Common myeloid progenitor, CD34-positive (primary cell): ENCODE measurements at regions of chr2 and their contacts with region 1.

Region 1: DNA sequence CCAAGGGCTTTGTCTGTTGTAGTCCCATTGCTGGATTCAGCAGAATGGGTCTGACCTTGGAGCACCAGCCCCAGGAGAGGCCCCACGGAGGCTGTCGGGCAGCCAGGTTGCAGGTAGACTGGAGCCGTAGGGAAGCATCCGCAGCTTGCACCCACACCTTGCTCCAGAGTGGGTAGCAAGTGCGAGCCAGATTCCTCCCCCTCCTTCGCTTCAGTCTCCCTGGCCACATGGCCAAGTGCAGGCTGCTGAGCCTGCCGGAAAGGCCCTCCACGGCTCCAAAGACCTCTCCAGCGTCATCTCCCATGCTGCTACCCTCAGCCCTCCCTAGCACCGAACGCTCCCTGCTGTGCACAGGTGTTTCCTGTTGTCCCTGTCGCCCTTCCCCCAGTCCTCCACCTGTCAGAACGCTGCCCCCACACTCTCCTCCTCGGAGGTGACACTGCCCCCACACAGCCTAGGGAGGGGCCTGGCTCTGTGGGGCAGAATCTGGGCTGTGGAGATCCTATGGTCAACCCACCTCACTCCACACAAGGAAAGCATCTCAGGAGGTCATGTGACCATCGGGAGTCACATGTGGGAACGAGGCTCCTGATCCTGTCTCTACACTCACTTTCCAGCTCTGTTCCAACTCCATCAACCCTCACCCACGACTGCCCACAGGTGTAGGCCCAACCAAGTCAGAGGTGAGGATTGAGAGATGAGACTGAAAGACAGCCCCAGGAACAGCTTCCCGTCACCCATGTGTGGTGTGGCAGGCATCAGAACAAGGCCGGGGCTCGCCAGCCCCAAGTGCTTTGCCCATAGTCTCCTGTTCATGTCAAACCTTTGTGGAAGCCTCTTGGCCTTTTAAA is 8.3 kb downstream of the KCNF1 start:
- DNase-seq: no peak
- H3K4me3 ChIP-seq: no peak overlapping the region
- H3K27ac ChIP-seq: no peak overlapping the region
- H3K4me1 ChIP-seq: peaks cover 0 to 2% (median 0%) of the 10 kb centered on the region in 4 experiments
- H3K27me3 ChIP-seq: peaks cover 0 to 28% (median 9%) of the 10 kb centered on the region in 5 experiments

Region 2: GRCh38 chr2:10909050-10909995 is 10.7 kb before region 1 on chr2:
- CTCF ChIA-PET with region 1: interaction called, 11 read pairs
- POLR2A ChIA-PET with region 1: no interaction called
- DNase-seq: peak; percentile 32 to 62 (median 61)
- H3K4me3 ChIP-seq: no peak overlapping the region
- H3K27ac ChIP-seq: no peak overlapping the region
- H3K4me1 ChIP-seq: peaks cover 0 to 17% (median 10%) of the 10 kb centered on the region in 4 experiments
- H3K27me3 ChIP-seq: peaks cover 0 to 48% (median 22%) of the 10 kb centered on the region in 5 experiments

Region 3: GRCh38 chr2:10935953-10936942 is 16.3 kb after region 1 on chr2:
- CTCF ChIA-PET with region 1: no interaction called
- POLR2A ChIA-PET with region 1: no interaction called
- DNase-seq: no peak
- H3K4me3 ChIP-seq: no peak overlapping the region
- H3K27ac ChIP-seq: no peak overlapping the region
- H3K4me1 ChIP-seq: no peaks in the 10 kb centered on the region
- H3K27me3 ChIP-seq: peaks cover 0 to 7% (median 0%) of the 10 kb centered on the region in 5 experiments